Cardiac septum (tissue), 1 donor: ENCODE measurements at regions of chr9 and their contacts with region 1.

Region 1: GRCh38 chr9:110183208-110184145 is 24.5 kb downstream of the C9orf152 start:
- DNase-seq: no peak

Region 2: DNA sequence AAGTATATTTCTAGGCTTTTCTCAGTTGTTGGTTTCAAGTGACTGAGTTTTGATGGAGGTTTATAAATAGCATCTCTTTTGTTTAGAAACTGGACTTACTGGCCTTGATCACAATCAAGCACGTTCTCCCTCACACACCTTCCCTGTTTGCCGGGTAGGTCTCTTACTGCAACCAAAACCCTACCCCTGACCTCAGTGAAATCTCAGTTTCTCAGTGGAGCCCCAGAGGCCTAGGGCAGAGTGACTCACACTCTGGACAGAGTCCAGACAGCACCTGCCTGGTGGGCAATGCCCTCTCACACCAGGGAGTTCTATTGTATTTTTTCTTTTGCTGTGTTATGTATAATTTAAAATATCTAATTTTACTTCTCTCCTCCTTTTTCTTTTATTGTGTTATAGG is 814.2 kb before region 1 on chr9:
- intact Hi-C with region 1: no loop called
- DNase-seq: no peak

Region 3: DNA sequence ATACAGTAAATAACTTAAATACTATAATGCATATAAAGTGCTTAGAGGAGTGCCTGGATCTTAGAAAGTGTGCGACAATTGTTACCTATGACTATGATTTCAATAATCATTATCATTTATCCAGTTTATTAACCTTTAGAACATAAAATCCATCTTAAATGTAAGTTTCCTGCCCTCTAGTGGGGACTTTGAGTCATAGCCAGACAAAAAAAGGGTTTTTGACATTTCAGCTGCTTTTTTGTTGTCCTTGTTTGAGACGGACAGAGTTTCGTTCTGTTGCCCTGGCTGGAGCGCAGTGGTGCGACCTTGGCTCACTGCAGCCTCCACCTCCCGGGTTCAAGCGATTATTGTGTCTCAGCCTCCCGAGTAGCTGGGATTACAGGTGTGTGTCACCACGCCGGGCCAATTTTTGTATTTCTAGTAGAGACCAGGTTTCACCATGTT is 34.2 kb after region 1 on chr9:
- intact Hi-C with region 1: loop called (anchors 5 kb)
- DNase-seq: no peak

Region 4: DNA sequence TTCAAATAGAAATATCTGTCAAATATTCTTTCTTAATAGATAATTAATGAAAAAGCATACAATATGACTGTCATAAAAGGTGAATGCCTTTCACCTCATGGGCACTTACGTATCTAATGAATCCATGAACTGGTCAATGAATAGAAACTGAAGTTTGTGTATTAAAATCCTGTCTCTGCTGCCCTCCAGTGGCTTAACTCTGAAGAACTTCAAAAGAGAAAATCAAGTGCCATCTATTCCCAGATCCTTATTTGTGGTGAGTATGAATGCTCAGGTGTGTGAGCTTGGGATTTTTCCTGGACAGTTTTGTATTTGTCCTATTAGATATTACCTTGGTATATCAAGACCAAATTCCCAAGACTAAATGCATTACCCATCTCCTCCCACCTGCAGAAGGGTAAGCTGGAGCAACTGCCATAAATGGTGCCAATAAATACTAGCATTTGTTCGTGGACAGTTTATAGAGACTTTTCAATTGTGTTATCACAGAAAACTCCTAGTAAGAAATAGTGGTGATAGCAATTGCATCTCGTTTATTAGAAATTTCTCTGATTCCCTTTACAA is 440.1 kb after region 1 on chr9:
- intact Hi-C with region 1: loop called (anchors 10 kb)
- DNase-seq: no peak